ENCODE measurements at regions of chr16 and their contacts with region 1.

Region 1: DNA sequence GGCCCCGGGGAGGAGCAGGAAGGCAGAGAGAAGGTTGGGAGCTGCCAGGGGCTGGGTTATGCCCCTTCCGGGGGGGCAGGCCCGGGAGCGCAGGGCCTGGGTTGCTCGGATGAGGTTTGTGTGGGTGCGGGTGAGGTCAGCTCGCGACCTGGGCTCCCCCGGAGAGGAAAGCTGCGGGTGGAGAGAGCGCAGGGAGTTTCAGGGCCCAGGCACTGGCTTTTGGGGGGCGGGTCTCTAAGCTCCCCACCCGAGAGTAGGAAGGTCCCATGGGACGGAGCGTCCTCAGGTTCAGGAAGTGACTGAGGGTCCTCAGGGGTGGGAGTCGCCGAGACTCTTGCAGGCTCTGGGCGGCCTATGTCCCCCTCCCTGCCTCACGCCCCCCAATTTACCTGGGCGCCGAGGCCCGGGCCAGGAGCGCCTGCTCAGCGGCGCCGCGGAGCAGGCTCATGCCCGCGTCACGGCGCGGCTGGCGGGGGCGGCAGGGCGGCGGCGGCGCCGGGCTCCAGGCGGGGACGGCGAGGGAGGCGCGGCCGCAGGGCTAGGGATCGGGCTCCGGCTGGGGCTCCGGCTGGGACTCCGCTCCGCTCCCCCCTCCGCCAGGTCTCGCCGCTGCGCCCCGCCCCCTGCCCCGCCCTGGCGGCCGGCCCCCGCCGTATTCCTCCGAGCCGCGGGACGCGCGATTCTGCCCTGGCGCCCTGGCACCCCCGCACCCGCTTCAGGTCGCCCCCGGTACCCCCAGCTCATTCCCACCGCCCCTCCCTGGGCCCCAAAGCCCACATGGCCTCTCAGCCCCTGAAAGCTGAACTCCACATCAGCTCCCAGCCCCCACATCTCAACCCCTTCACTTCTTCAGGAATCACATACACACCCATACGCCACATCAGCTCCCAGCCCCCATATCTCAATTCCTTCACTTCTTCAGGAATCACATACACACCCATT is at the start of gene DOK4:
- DNase-seq: no peak
- H3K4me3 ChIP-seq: peak within 1 kb of the TSS; percentile 65
- CTCF ChIP-seq: no peak

Region 2: GRCh38 chr16:57528491-57529390 is 42.6 kb after region 1 on chr16:
- in situ Hi-C with region 1: loop called (anchors 5 kb)
- DNase-seq: no peak
- H3K4me3 ChIP-seq: no peak overlapping the region
- CTCF ChIP-seq: no peak

Measured in astrocyte of the cerebellum (primary cell).